ENCODE measurements at regions of chr7 and their contacts with region 1.

Region 1: GRCh38 chr7:52294942-52295341 is 740.5 kb upstream of the POM121L12 start:
- DNase-seq: no peak
- H3K4me3 ChIP-seq: no peak overlapping the region
- H3K27ac ChIP-seq: no peak overlapping the region
- H3K4me1 ChIP-seq: no peaks in the 10 kb centered on the region
- CTCF ChIP-seq: no peak

Region 2: GRCh38 chr7:51543801-51544553 is 751.0 kb before region 1 on chr7:
- CTCF ChIA-PET with region 1: no interaction called
- POLR2A ChIA-PET with region 1: no interaction called
- intact Hi-C with region 1: no loop called
- DNase-seq: no peak
- H3K4me3 ChIP-seq: no peak overlapping the region
- H3K27ac ChIP-seq: no peak overlapping the region
- H3K4me1 ChIP-seq: no peaks in the 10 kb centered on the region
- CTCF ChIP-seq: no peak

Region 3: GRCh38 chr7:52209614-52210013 is 85.3 kb before region 1 on chr7:
- CTCF ChIA-PET with region 1: no interaction called
- POLR2A ChIA-PET with region 1: no interaction called
- intact Hi-C with region 1: loop called (anchors 10 kb)
- DNase-seq: no peak
- H3K4me3 ChIP-seq: no peak overlapping the region
- H3K27ac ChIP-seq: no peak overlapping the region
- H3K4me1 ChIP-seq: no peaks in the 10 kb centered on the region
- CTCF ChIP-seq: no peak

Region 4: GRCh38 chr7:52525772-52526341 is 230.9 kb after region 1 on chr7:
- CTCF ChIA-PET with region 1: no interaction called
- POLR2A ChIA-PET with region 1: no interaction called
- intact Hi-C with region 1: no loop called
- DNase-seq: no peak
- H3K4me3 ChIP-seq: no peak overlapping the region
- H3K27ac ChIP-seq: no peak overlapping the region
- H3K4me1 ChIP-seq: no peaks in the 10 kb centered on the region
- CTCF ChIP-seq: no peak

Measured in OCI-LY7 (cell line).